ENCODE measurements at regions of chr7 and their contacts with region 1.

Region 1: GRCh38 chr7:97027427-97028234 is 3.0 kb upstream of the DLX5 start:
- DNase-seq: peak; percentile 83
- ATAC-seq: peak; percentile 82
- H3K4me3 Mint-ChIP-seq: peak overlapping the region; percentile 49
- H3K27ac Mint-ChIP-seq: no peak overlapping the region
- H3K4me1 Mint-ChIP-seq: peaks cover 36% of the 10 kb centered on the region
- H3K27me3 Mint-ChIP-seq: peaks cover 60% of the 10 kb centered on the region

Region 2: GRCh38 chr7:95916573-95917297 is 1110.9 kb before region 1 on chr7:
- CTCF ChIA-PET with region 1: interaction called, 45 read pairs
- POLR2A ChIA-PET with region 1: no interaction called
- intact Hi-C with region 1: loop called (anchors 1 kb)
- DNase-seq: peak; percentile 86
- ATAC-seq: no peak
- H3K4me3 Mint-ChIP-seq: no peak overlapping the region
- H3K27ac Mint-ChIP-seq: no peak overlapping the region
- H3K4me1 Mint-ChIP-seq: peaks cover 2% of the 10 kb centered on the region
- H3K27me3 Mint-ChIP-seq: peaks cover 15% of the 10 kb centered on the region

Region 3: GRCh38 chr7:96414931-96415292 is 612.7 kb before region 1 on chr7:
- CTCF ChIA-PET with region 1: interaction called, 5 read pairs
- POLR2A ChIA-PET with region 1: no interaction called
- intact Hi-C with region 1: loop called (anchors 1 kb)
- DNase-seq: peak; percentile 66
- ATAC-seq: peak; percentile 55
- H3K4me3 Mint-ChIP-seq: no peak overlapping the region
- H3K27ac Mint-ChIP-seq: no peak overlapping the region
- H3K4me1 Mint-ChIP-seq: no peaks in the 10 kb centered on the region
- H3K27me3 Mint-ChIP-seq: peaks cover 10% of the 10 kb centered on the region

Region 4: GRCh38 chr7:96996105-96996957 is 31.3 kb before region 1 on chr7:
- CTCF ChIA-PET with region 1: interaction called, 3 read pairs
- POLR2A ChIA-PET with region 1: no interaction called
- intact Hi-C with region 1: loop called (anchors 5 kb)
- DNase-seq: no peak
- ATAC-seq: no peak
- H3K4me3 Mint-ChIP-seq: no peak overlapping the region
- H3K27ac Mint-ChIP-seq: no peak overlapping the region
- H3K4me1 Mint-ChIP-seq: peaks cover 5% of the 10 kb centered on the region
- H3K27me3 Mint-ChIP-seq: peaks cover 79% of the 10 kb centered on the region

Region 5: DNA sequence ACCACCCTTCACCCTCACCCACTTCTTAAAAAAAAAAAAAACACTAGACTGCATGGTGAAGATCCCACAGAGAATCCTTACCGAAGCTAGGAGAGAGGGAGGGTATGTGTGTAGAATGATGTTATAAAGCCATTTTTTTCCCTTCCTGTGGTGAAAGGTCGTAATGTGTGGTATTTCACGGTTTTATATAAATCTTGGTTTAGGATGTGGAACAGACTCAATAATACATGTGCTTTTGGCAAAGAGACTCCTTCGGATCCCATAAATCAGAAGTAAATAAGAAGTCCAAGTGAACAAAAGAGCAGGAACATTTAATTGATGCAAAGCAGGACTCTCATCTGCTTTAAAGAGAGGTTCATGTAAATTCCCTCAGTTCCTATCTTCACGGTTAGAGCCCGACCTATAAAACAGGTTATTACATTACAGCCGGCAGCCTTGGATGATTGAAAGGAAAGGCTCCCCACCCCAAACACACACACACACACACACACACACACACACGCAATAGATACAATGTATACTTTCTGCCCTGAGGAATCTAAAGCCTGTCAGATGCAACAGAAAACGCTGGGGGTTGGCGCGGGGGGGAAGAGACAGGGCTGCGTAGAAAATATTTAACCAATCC is 11.8 kb before region 1 on chr7:
- CTCF ChIA-PET with region 1: interaction called, 19 read pairs
- POLR2A ChIA-PET with region 1: interaction called, 3 read pairs
- intact Hi-C with region 1: loop called in 1 of 2 experiments (anchors 1 kb)
- DNase-seq: no peak
- ATAC-seq: no peak
- H3K4me3 Mint-ChIP-seq: no peak overlapping the region
- H3K27ac Mint-ChIP-seq: no peak overlapping the region
- H3K4me1 Mint-ChIP-seq: peaks cover 12% of the 10 kb centered on the region
- H3K27me3 Mint-ChIP-seq: peaks cover 91% of the 10 kb centered on the region

Region 6: DNA sequence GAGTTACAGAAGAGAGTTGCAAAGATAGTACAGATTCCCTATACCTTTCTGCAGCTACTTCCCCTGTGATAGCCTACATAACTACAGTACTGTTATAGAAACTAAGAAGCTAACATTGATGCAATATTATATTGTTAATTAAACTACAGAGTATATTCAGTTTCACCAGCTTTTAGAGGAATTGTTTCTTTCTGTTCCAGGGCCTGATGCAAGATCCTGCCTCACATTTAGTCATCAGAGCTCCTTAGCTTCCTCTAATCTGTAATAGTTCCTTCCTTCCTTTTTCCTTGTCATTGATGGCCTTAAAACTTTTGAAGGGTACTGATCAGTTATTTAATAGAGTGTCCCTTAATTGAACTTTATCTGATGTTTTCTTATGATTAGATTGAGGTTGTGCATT is 146.7 kb after region 1 on chr7:
- CTCF ChIA-PET with region 1: no interaction called
- POLR2A ChIA-PET with region 1: no interaction called
- intact Hi-C with region 1: no loop called
- DNase-seq: no peak
- ATAC-seq: no peak
- H3K4me3 Mint-ChIP-seq: no peak overlapping the region
- H3K27ac Mint-ChIP-seq: no peak overlapping the region
- H3K4me1 Mint-ChIP-seq: peaks cover 6% of the 10 kb centered on the region
- H3K27me3 Mint-ChIP-seq: no peaks in the 10 kb centered on the region

Region 7: DNA sequence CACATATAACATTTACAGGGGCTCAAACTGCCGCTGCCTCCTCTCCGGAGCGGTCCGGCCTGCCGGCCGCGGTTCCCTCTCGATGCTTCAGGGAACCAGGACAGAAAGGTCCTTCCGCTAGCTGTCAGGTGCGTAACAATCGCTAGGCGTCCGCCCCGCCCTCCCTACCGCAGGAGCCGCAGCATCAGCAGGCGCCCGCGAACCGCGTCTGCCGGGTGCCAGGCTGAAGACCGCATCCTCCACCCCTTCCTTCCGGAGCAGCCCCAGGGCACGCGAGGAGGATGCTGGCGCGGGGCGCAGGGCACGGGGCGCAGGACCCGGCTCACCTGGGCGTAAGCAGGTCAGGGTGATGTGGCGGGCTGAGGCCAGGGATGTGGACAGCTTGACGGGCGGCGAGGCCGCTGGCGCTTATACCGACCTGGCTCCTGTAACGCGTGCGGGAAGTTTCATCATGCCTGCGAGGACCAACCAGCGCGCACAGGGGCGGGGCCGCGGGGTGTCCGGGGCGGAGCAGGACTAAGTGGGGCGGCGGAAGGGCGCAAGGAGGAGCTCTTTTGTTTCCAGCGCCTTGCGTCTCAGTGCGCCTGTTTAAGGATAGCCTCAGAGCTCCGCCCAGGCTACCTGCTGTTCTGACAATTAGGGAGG is 844.5 kb after region 1 on chr7 and contains the start of gene ASNS:
- CTCF ChIA-PET with region 1: no interaction called
- POLR2A ChIA-PET with region 1: interaction called, 10 read pairs
- intact Hi-C with region 1: no loop called
- DNase-seq: peak; percentile 96
- ATAC-seq: peak; percentile 96
- H3K4me3 Mint-ChIP-seq: peak within 1 kb of the TSS; percentile 92
- H3K27ac Mint-ChIP-seq: peak within 1 kb of the TSS; percentile 82
- H3K4me1 Mint-ChIP-seq: peaks cover 20% of the 10 kb centered on the region
- H3K27me3 Mint-ChIP-seq: no peaks in the 10 kb centered on the region
- total RNA-seq, gene ASNS: 228 to 247 TPM

Measured in activated CD4-positive, alpha-beta T cell treated with anti-CD3 and anti-CD28 coated beads for 36 hours (primary cell).